Colonic mucosa (tissue), 4 donors: ENCODE measurements at regions of chr4 and their contacts with region 1.

Region 1: GRCh38 chr4:88514557-88515511 is 8.7 kb downstream of the PYURF start:
- DNase-seq: no peak
- H3K4me3 ChIP-seq: no peak overlapping the region
- H3K27ac ChIP-seq: no peak overlapping the region
- H3K4me1 ChIP-seq: no peaks in the 10 kb centered on the region
- H3K27me3 ChIP-seq: no peaks in the 10 kb centered on the region
- CTCF ChIP-seq: no peak

Region 2: DNA sequence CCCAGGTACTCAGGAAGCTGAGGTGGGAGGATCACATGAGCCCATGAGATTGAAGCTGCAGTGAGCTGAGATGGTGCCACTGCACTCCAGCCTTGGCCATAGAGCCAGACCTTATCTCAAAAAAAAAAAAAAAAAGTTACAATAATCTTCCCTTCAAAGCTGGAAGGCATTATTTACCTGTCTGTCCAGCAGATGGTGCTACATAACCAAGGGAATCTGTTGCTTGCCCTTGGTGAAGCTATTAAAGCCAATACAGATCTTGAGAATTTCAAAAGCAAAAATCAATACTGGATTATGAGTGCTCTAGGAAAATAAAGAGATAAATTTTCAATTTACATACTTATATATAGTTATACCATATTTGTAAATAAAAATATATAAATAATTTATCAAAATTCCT is 481.5 kb before region 1 on chr4:
- intact Hi-C with region 1: loop called (anchors 5 kb)
- DNase-seq: peak; percentile 60
- H3K4me3 ChIP-seq: no peak overlapping the region
- H3K27ac ChIP-seq: no peak overlapping the region
- H3K4me1 ChIP-seq: no peaks in the 10 kb centered on the region
- H3K27me3 ChIP-seq: no peaks in the 10 kb centered on the region
- CTCF ChIP-seq: peak; percentile 60

Region 3: DNA sequence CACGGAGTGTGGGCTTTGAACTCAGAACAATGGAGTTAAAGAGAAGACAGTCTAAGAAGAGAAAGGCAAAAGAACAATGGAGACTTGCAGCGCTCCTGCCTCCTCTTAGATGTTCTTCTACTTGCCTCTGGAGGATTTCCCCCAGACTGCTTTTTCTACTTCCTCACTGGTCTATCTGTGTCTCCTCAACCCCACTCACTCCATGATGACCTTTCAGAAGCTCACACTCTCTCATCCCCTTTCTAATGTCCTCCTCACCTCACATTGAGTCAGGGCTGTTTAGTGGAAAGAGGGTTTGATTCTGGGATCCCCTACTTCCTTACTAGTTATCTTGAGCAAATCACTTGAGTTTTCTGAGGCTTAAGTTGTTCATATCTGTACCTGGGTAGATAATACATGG is 148.4 kb before region 1 on chr4:
- intact Hi-C with region 1: loop called (anchors 5 kb)
- DNase-seq: no peak
- H3K4me3 ChIP-seq: no peak overlapping the region
- H3K27ac ChIP-seq: no peak overlapping the region
- H3K4me1 ChIP-seq: no peaks in the 10 kb centered on the region
- H3K27me3 ChIP-seq: no peaks in the 10 kb centered on the region
- CTCF ChIP-seq: no peak

Region 4: DNA sequence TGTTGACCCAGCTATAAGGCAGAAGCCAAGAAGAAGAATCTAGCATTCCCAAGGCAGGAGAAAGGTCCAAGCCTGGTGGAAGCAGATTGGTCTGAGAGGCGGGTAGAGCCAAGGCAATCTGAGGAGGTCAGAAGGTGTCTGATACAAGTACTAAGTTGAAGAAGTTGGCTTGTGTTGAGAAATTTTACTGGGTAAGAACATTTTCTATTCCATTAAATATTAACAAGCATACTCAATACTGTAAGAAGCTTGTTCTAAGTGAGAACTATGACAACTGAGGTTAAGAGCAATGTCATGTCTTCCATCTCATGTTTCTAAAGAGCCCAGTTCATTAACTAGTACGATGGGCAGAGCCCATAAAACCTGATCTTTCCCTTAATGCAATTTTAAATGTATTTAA is 467.2 kb after region 1 on chr4:
- intact Hi-C with region 1: no loop called
- DNase-seq: no peak
- H3K4me3 ChIP-seq: no peak overlapping the region
- H3K27ac ChIP-seq: no peak overlapping the region
- H3K4me1 ChIP-seq: no peaks in the 10 kb centered on the region
- H3K27me3 ChIP-seq: no peaks in the 10 kb centered on the region
- CTCF ChIP-seq: no peak